ENCODE measurements at regions of chr17 and their contacts with region 1.

Region 1: DNA sequence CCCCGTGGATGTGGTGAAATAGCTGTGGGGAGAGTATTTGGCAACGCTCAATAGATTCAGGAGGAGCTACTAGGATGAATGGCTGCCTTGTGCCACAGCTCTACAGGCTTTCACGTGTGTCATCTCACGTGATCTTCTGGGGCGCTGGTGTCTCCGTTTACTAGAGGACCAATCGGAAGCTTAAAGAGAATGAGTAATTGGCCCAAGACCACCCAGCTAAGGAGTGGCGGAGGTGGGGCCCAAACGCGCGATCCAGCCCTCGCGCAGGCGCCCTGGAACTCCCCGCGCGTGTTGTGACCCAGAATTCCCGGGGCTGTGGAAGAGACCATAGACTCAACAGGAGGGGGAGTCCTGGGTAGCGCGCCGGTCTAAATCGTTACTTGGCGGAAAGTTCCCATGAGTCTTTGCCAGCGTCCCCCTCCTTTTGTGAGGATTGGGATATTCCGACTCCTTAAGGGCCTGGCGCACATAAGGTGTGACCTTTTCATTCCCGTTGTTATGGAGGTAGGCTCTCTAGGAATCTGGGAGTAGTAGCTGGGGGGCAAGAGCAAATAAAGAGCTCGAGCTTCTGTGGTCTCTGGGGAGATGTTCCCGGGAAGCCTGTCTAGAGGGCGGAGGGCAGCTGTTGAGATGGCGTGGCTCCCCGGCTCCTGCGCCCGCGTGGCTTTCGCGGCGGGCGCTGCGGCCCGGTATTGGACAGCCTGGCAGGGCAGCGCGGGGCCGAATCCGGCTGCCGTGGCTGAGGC is 23.4 kb downstream of the TRPV2 start:
- DNase-seq: peak; percentile 99
- H3K4me3 ChIP-seq: peak overlapping the region; percentile 94
- H3K27me3 ChIP-seq: no peaks in the 10 kb centered on the region
- CTCF ChIP-seq: no peak

Region 2: DNA sequence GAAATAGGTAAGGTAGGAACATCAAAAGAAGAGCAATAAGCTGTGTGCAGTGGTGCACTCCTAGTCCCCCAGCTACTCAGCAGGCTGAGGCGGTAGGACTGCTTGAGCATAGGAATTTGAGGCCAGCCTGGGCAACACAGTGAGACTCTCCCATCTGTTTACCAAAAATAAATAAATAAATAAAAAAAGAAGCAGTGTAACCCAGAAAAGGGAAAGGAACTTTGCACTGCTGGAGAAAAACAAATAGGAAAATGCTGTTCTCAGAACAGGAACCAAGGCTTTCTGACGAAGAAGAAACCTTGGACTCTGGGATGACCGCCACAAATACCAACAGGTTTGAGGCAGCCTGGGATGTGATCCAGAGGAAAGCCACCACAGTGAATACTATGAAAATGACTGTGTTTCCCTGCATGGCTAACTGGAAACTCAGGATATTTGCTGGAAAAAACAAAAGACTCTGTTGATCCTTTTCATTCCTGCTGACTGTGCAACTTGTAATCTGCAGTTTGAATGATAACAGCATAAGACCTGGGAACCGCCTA is 397.9 kb before region 1 on chr17:
- CTCF ChIA-PET with region 1: no interaction called
- POLR2A ChIA-PET with region 1: interaction called, 20 read pairs
- DNase-seq: peak; percentile 43
- H3K4me3 ChIP-seq: no peak overlapping the region
- H3K27me3 ChIP-seq: no peaks in the 10 kb centered on the region
- CTCF ChIP-seq: no peak

Region 3: DNA sequence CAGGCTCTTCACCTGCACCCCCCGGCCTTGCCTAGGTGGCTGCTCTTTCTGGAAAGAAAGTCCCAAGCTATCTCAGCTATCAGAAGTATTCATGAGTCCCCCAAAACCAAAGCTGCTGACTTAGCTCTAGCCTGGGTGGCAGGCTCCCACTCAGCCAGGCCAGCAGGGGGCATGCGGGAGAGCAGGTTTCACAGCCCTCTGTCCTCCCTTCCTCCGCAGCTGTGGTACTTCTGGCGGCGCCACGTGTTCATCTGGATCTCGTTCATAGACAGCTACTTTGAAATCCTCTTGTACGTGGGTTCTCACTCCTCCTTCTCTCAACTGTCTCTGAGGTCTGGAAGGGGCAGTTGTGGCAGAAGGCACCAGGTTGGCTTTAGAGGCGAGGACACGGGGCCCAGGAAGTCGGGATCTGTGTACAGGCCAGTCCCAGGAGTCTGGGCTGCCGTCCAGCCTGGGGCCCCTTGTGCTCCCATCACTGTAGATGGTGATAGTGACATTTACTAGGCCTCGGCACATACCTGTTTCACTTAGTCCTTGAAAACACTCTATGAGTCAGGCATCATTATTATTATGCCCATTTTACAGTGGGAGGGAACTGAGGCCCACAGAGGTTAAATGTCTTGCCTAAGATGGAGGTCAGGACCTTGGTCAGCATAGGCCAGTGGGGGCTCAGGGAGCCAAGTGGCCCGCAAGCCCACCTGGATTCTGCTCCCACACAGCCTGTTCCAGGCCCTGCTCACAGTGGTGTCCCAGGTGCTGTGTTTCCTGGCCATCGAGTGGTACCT is 10.4 kb before region 1 on chr17:
- CTCF ChIA-PET with region 1: interaction called, 15 read pairs
- POLR2A ChIA-PET with region 1: interaction called, 6 read pairs
- DNase-seq: no peak
- H3K4me3 ChIP-seq: no peak overlapping the region
- H3K27me3 ChIP-seq: no peaks in the 10 kb centered on the region
- CTCF ChIP-seq: peak; percentile 83

Measured in BJ (cell line).